GM12878 (cell line): ENCODE measurements at regions of chr2 and their contacts with region 1.

Region 1: GRCh38 chr2:177148477-177149154 is 64.0 kb upstream of the HNRNPA3 start:
- DNase-seq: peak; percentile 45
- ATAC-seq: peak; percentile 95
- H3K4me3 ChIP-seq: peak overlapping the region; percentile 69
- H3K27ac ChIP-seq: no peak overlapping the region
- H3K4me1 ChIP-seq: no peaks in the 10 kb centered on the region
- H3K27me3 ChIP-seq: peaks cover 0 to 2% of the 10 kb centered on the region in 2 experiments; a peak in 1 of 4 replicates
- CTCF ChIP-seq: peak; percentile 87 to 93 (median 92)
- EP300 ChIP-seq: 0 out of 4 replicates have a peak, but pooled peaks of 1 of the 2 experiments have one; percentile 13
- POLR2A ChIP-seq: no peak
- RAD21 ChIP-seq: peak; percentile 67

Region 2: GRCh38 chr2:176454893-176455811 is 693.5 kb before region 1 on chr2:
- CTCF ChIA-PET with region 1: interaction called, 15 read pairs
- POLR2A ChIA-PET with region 1: no interaction called
- RAD21 ChIA-PET with region 1: interaction called, 5 read pairs
- SMC1A ChIA-PET with region 1: interaction called, 8 read pairs
- in situ Hi-C with region 1: loop called (anchors 5 kb)
- intact Hi-C with region 1: loop called (anchors 5 kb)
- DNase-seq: no peak
- ATAC-seq: peak; percentile 93
- H3K4me3 ChIP-seq: no peak overlapping the region
- H3K27ac ChIP-seq: no peak overlapping the region
- H3K4me1 ChIP-seq: no peaks in the 10 kb centered on the region
- H3K27me3 ChIP-seq: no peaks in the 10 kb centered on the region
- CTCF ChIP-seq: peak; percentile 75 to 84 (median 80)
- EP300 ChIP-seq: no peak; a peak in 1 of 4 replicates
- POLR2A ChIP-seq: no peak
- RAD21 ChIP-seq: peak; percentile 75

Region 3: GRCh38 chr2:176664478-176664877 is 484.1 kb before region 1 on chr2:
- CTCF ChIA-PET with region 1: interaction called, 12 read pairs
- POLR2A ChIA-PET with region 1: no interaction called
- RAD21 ChIA-PET with region 1: no interaction called
- SMC1A ChIA-PET with region 1: interaction called, 5 read pairs
- in situ Hi-C with region 1: loop called (anchors 5 kb)
- intact Hi-C with region 1: no loop called
- DNase-seq: no peak
- ATAC-seq: no peak
- H3K4me3 ChIP-seq: no peak overlapping the region
- H3K27ac ChIP-seq: no peak overlapping the region
- H3K4me1 ChIP-seq: peaks cover 3% of the 10 kb centered on the region; the same call in 1 of the 2 replicates
- H3K27me3 ChIP-seq: no peaks in the 10 kb centered on the region
- CTCF ChIP-seq: no peak
- EP300 ChIP-seq: no peak
- POLR2A ChIP-seq: no peak
- RAD21 ChIP-seq: no peak

Region 4: DNA sequence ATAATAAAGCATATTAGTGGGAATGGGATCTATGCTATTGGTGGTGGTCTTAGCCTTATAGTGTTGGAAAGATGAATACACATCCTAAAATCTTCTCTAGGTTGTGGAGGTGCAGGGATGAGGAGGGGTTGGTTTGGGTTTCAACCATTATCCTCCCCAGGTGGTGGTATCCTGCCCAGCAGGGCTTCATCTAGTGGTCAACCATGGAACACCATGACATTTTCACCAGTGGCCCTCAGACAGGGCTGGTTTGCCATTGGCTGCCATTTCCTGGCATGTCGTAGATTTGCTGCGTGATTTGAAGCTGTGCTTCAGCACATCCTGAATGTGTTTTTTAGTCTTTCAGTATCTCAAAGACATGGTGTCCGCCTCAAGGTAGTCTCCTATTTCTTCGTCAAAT is 327.3 kb before region 1 on chr2:
- CTCF ChIA-PET with region 1: interaction called, 250 read pairs
- POLR2A ChIA-PET with region 1: no interaction called
- RAD21 ChIA-PET with region 1: interaction called, 21 read pairs
- SMC1A ChIA-PET with region 1: interaction called, 17 read pairs
- in situ Hi-C with region 1: loop called (anchors 5 kb)
- intact Hi-C with region 1: no loop called
- DNase-seq: no peak
- ATAC-seq: 0 out of 3 replicates have a peak, but pooled peaks have one; percentile 47
- H3K4me3 ChIP-seq: no peak overlapping the region
- H3K27ac ChIP-seq: no peak overlapping the region
- H3K4me1 ChIP-seq: no peaks in the 10 kb centered on the region
- H3K27me3 ChIP-seq: no peaks in the 10 kb centered on the region
- CTCF ChIP-seq: peak in 1 of 3 experiments; percentile 7; a peak in 1 of 6 replicates
- EP300 ChIP-seq: no peak
- POLR2A ChIP-seq: no peak
- RAD21 ChIP-seq: no peak

Region 5: GRCh38 chr2:177028296-177028695 is 120.3 kb before region 1 on chr2:
- CTCF ChIA-PET with region 1: interaction called, 13 read pairs
- POLR2A ChIA-PET with region 1: no interaction called
- RAD21 ChIA-PET with region 1: no interaction called
- SMC1A ChIA-PET with region 1: interaction called, 5 read pairs
- in situ Hi-C with region 1: no loop called
- intact Hi-C with region 1: no loop called
- DNase-seq: no peak
- ATAC-seq: no peak
- H3K4me3 ChIP-seq: no peak overlapping the region
- H3K27ac ChIP-seq: no peak overlapping the region
- H3K4me1 ChIP-seq: no peaks in the 10 kb centered on the region
- H3K27me3 ChIP-seq: no peaks in the 10 kb centered on the region
- CTCF ChIP-seq: no peak
- EP300 ChIP-seq: no peak
- POLR2A ChIP-seq: no peak
- RAD21 ChIP-seq: no peak

Region 6: GRCh38 chr2:177332041-177332991 is 183.7 kb after region 1 on chr2:
- CTCF ChIA-PET with region 1: interaction called, 22 read pairs
- POLR2A ChIA-PET with region 1: no interaction called
- RAD21 ChIA-PET with region 1: interaction called, 5 read pairs
- SMC1A ChIA-PET with region 1: interaction called, 7 read pairs
- in situ Hi-C with region 1: no loop called
- intact Hi-C with region 1: no loop called
- DNase-seq: peak; percentile 45
- ATAC-seq: peak; percentile 92
- H3K4me3 ChIP-seq: no peak overlapping the region
- H3K27ac ChIP-seq: no peak overlapping the region
- H3K4me1 ChIP-seq: no peaks in the 10 kb centered on the region
- H3K27me3 ChIP-seq: no peaks in the 10 kb centered on the region
- CTCF ChIP-seq: peak; percentile 55 to 79 (median 62)
- EP300 ChIP-seq: no peak
- POLR2A ChIP-seq: no peak
- RAD21 ChIP-seq: peak; percentile 90